ENCODE measurements at regions of chr2 and their contacts with region 1.

Region 1: GRCh38 chr2:195318440-195319111 is 338.4 kb upstream of the SLC39A10 start:
- DNase-seq: peak; percentile 17
- H3K4me3 ChIP-seq: no peak overlapping the region
- H3K27ac ChIP-seq: no peak overlapping the region
- H3K4me1 ChIP-seq: peaks cover 14% of the 10 kb centered on the region
- H3K27me3 ChIP-seq: no peaks in the 10 kb centered on the region
- CTCF ChIP-seq: peak; percentile 13 to 71 (median 56)
- POLR2A ChIP-seq: no peak

Region 2: DNA sequence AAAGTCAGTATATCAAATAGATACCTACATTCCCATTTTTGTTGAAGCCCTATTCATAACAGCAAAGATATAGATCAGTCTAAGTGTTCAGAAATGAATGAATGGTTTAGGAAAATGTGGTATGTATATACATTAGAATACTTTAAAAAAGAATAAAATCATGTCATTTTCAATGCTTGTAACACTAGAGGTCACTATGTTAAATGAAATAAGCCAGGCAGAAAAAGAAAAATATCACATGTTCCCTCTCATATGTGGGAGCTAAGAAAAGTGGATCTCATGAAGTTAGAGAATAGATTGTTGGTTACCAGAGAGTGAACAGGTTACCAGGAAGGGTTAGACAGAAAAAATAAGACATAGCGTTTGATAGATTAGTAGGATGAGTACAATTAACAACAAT is 772.6 kb before region 1 on chr2:
- intact Hi-C with region 1: loop called (anchors 5 kb)
- DNase-seq: no peak
- H3K4me3 ChIP-seq: no peak overlapping the region
- H3K27ac ChIP-seq: no peak overlapping the region
- H3K4me1 ChIP-seq: no peaks in the 10 kb centered on the region
- H3K27me3 ChIP-seq: no peaks in the 10 kb centered on the region
- CTCF ChIP-seq: peak in 1 of 4 experiments; percentile 24
- POLR2A ChIP-seq: no peak

Measured in prostate gland (tissue), 2 donors.